HCT116 (cell line): ENCODE measurements at regions of chr1 and their contacts with region 1.

Region 1: GRCh38 chr1:63674238-63674864 is 81.1 kb downstream of the PGM1 start:
- DNase-seq: peak; percentile 67
- ATAC-seq: peak; percentile 96
- H3K4me3 ChIP-seq: no peak overlapping the region
- H3K27ac ChIP-seq: no peak overlapping the region
- H3K4me1 ChIP-seq: peaks cover 7 to 28% of the 10 kb centered on the region in 2 experiments; a peak in 3 of 4 replicates
- H3K27me3 ChIP-seq: no peaks in the 10 kb centered on the region
- CTCF ChIP-seq: peak; percentile 61 to 79 (median 77); a peak in 5 of 6 replicates
- POLR2A ChIP-seq: no peak
- RAD21 ChIP-seq: peak; percentile 88

Region 2: DNA sequence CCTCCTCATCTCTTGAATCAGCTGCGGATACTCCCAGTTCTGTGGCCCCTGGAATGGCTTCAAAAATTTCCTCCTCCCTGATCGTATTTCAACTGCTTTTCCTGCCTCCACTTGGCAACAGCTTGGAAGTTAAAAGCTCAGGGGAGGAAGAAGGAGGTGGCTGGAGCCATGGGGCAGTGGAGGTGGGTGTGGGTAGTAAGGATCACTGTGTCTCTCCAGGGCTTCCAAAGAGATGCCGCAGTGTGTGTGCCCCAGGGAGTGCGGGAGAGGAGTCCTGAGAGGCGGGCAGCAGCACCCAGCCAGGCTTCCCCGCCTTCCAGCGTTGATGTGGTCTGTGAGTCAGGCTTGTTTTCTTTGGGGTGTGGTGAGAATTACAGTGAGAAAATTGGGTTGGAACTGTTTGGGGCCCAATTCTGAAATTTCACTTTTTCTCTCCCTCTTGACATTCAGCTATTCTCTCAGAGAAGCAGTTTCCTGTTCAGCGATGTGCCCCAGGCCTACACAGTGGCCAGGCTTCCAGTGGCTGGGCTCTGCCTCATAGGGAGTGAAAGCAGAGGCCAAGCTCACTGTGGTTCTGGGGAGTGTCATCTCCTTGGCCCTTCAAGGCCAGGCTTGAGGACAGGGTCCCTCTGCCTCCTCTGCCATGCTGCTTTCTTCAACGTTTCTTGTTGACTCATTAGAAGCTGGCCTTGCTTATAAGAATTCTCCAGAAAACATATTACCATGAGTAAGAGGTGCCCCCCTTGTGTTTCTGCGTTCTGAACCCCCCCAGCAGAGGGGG is 12.1 kb before region 1 on chr1:
- CTCF ChIA-PET with region 1: interaction called, 33 read pairs
- POLR2A ChIA-PET with region 1: interaction called, 7 read pairs
- RAD21 ChIA-PET with region 1: interaction called in 1 of 2 experiments, 3 read pairs
- intact Hi-C with region 1: no loop called
- DNase-seq: peak; percentile 78
- ATAC-seq: peak; percentile 87
- H3K4me3 ChIP-seq: peak overlapping the region; percentile 2 to 41
- H3K27ac ChIP-seq: peak overlapping the region; percentile 91
- H3K4me1 ChIP-seq: peaks cover 34 to 58% of the 10 kb centered on the region in 2 experiments
- H3K27me3 ChIP-seq: no peaks in the 10 kb centered on the region
- CTCF ChIP-seq: no peak
- POLR2A ChIP-seq: no peak
- RAD21 ChIP-seq: peak; percentile 31; the same call in 1 of the 2 replicates